ENCODE measurements at regions of chr10 and their contacts with region 1.

Region 1: GRCh38 chr10:113958631-113959382 is 84.9 kb upstream of the ADRB1 start:
- DNase-seq: no peak
- H3K4me3 Mint-ChIP-seq: no peak overlapping the region
- H3K27ac Mint-ChIP-seq: no peak overlapping the region
- H3K4me1 Mint-ChIP-seq: peaks cover 39% of the 10 kb centered on the region
- H3K27me3 Mint-ChIP-seq: peaks cover 18% of the 10 kb centered on the region

Region 2: GRCh38 chr10:113027574-113028455 is 931.0 kb before region 1 on chr10:
- intact Hi-C with region 1: no loop called
- DNase-seq: no peak
- H3K4me3 Mint-ChIP-seq: no peak overlapping the region
- H3K27ac Mint-ChIP-seq: no peak overlapping the region
- H3K4me1 Mint-ChIP-seq: no peaks in the 10 kb centered on the region
- H3K27me3 Mint-ChIP-seq: peaks cover 23% of the 10 kb centered on the region

Region 3: GRCh38 chr10:113854011-113854760 is 104.6 kb before region 1 on chr10 and contains the starts of genes DCLRE1A and NHLRC2:
- intact Hi-C with region 1: loop called (anchors 1 kb)
- DNase-seq: peak; percentile 45
- H3K4me3 Mint-ChIP-seq: peak within 1 kb of the TSS; percentile 98
- H3K27ac Mint-ChIP-seq: peak within 1 kb of the TSS; percentile 93
- H3K4me1 Mint-ChIP-seq: peaks cover 51% of the 10 kb centered on the region
- H3K27me3 Mint-ChIP-seq: no peaks in the 10 kb centered on the region
- total RNA-seq, gene DCLRE1A: 14.4 and 16.0 TPM in 2 replicates
- total RNA-seq, gene NHLRC2: 28.2 and 28.9 TPM in 2 replicates

Region 4: GRCh38 chr10:113907166-113907565 is 51.6 kb before region 1 on chr10:
- intact Hi-C with region 1: no loop called
- DNase-seq: no peak
- H3K4me3 Mint-ChIP-seq: no peak overlapping the region
- H3K27ac Mint-ChIP-seq: no peak overlapping the region
- H3K4me1 Mint-ChIP-seq: no peaks in the 10 kb centered on the region
- H3K27me3 Mint-ChIP-seq: no peaks in the 10 kb centered on the region

Region 5: DNA sequence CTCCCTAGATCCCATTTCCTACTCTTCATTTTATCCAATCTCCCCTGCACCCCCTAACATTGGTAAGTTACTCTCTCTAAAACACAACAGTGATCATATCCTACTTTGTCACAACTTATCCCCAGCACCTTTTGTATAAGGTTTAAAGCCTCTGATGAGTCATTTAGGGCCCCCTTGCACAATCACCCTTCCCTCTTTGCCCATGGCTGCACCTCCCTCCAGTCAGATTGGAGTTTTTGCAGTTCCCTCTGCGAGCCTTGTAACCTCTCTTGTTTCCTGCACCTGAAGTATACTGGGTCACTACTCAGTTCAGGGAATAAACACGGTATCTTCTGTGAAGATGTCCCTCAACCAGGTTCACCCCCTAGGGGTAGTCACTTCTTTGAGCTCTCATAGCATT is 29.0 kb after region 1 on chr10:
- intact Hi-C with region 1: loop called (anchors 2 kb)
- DNase-seq: no peak
- H3K4me3 Mint-ChIP-seq: no peak overlapping the region
- H3K27ac Mint-ChIP-seq: no peak overlapping the region
- H3K4me1 Mint-ChIP-seq: peaks cover 23% of the 10 kb centered on the region
- H3K27me3 Mint-ChIP-seq: peaks cover 64% of the 10 kb centered on the region

Region 6: GRCh38 chr10:114043532-114044246 is 84.9 kb after region 1 on chr10 and contains the start of gene ADRB1:
- intact Hi-C with region 1: loop called (anchors 5 kb)
- DNase-seq: no peak
- H3K4me3 Mint-ChIP-seq: peak within 1 kb of the TSS; percentile 67
- H3K27ac Mint-ChIP-seq: no peak within 1 kb of the TSS
- H3K4me1 Mint-ChIP-seq: peaks cover 8% of the 10 kb centered on the region
- H3K27me3 Mint-ChIP-seq: peaks cover 82% of the 10 kb centered on the region
- total RNA-seq, gene ADRB1: not detected in 2 replicates

Region 7: DNA sequence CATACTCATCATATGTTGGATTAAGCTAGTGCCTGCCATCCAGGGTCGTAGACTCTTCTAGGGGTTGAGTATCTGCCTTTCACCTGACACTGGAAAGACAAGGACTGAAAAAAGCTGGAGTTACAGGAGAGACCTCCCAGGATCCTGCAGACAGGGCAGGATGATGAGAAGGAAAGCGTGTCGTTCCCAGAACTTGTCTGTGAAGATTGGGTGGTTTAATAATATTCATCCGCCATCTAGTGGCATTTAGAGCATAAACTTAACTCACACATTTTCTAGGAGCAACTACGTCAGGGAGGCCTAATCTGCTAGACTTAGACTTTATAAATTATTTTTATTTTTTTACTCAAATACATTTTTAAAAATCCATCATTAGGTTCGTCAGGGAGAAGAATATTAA is 144.5 kb after region 1 on chr10:
- intact Hi-C with region 1: loop called (anchors 5 kb)
- DNase-seq: no peak
- H3K4me3 Mint-ChIP-seq: no peak overlapping the region
- H3K27ac Mint-ChIP-seq: no peak overlapping the region
- H3K4me1 Mint-ChIP-seq: peaks cover 21% of the 10 kb centered on the region
- H3K27me3 Mint-ChIP-seq: peaks cover 47% of the 10 kb centered on the region

Region 8: DNA sequence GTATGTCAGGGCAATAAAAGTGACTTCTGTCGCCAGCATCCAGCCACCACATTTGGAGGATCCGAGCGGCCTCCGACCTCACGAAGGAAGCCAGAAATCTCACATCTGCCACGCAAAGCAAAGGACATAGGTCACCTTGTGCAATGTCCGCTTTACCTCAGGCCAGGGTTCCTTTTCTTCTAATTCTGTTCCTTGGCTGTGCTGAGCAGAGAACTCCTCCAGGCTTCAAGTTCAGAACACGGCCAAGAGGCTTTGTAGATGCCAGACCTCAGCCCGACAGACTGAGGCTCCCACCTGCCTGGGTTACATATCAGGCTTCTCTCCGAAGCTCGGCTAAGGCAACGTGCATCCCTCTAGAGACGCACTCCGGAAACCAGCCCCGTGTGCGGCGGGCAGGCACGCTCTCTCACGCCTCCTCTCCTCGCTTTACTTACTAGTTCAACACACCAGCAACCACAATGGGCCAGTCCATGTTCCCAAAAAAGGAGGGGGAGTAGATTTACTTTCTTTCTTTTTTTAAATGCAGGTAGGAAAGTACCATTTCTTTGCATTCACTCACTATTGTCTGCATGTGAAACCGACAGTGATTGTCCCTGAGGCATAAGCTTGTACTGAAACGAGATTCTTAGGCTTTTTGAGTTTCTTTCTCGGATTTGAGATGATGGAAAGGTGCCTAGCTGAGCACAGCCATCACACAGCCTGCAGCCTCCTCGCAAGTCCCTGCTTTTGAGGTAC is 567.9 kb after region 1 on chr10:
- intact Hi-C with region 1: loop called (anchors 1 kb)
- DNase-seq: peak; percentile 82
- H3K4me3 Mint-ChIP-seq: peak overlapping the region; percentile 87
- H3K27ac Mint-ChIP-seq: peak overlapping the region; percentile 92
- H3K4me1 Mint-ChIP-seq: peaks cover 58% of the 10 kb centered on the region
- H3K27me3 Mint-ChIP-seq: peaks cover 2% of the 10 kb centered on the region

Region 9: GRCh38 chr10:114767101-114767985 is 808.5 kb after region 1 on chr10:
- intact Hi-C with region 1: no loop called
- DNase-seq: no peak
- H3K4me3 Mint-ChIP-seq: peak overlapping the region; percentile 77
- H3K27ac Mint-ChIP-seq: no peak overlapping the region
- H3K4me1 Mint-ChIP-seq: peaks cover 11% of the 10 kb centered on the region
- H3K27me3 Mint-ChIP-seq: peaks cover 59% of the 10 kb centered on the region

Measured in activated T-helper 1 cell treated with anti-CD3 and anti-CD28 coated beads, Interleukin-12 subunit alpha, Interleukin-12 subunit beta, Interleukin-2, Interleukin-4 antibody, amounts not matched to agents 30 ng/mL and 10 ng/mL and 1 ng/mL, durations not matched to agents 14 hours and 24 hours and 36 hours (primary cell).